HEK293 (cell line): ENCODE measurements at regions of chr7 and their contacts with region 1.

Region 1: GRCh38 chr7:139889186-139889871 is 60.3 kb downstream of the TBXAS1 start:
- H3K4me3 ChIP-seq: no peak overlapping the region
- H3K27ac ChIP-seq: no peak overlapping the region
- H3K4me1 ChIP-seq: no peaks in the 10 kb centered on the region
- CTCF ChIP-seq: no peak

Region 2: GRCh38 chr7:139871267-139871721 is 18.0 kb before region 1 on chr7:
- CTCF ChIA-PET with region 1: no interaction called
- POLR2A ChIA-PET with region 1: no interaction called
- H3K4me3 ChIP-seq: no peak overlapping the region
- H3K27ac ChIP-seq: no peak overlapping the region
- H3K4me1 ChIP-seq: no peaks in the 10 kb centered on the region
- CTCF ChIP-seq: no peak

Region 3: GRCh38 chr7:139914306-139915267 is 25.3 kb after region 1 on chr7:
- CTCF ChIA-PET with region 1: interaction called, 3 read pairs
- POLR2A ChIA-PET with region 1: interaction called, 10 read pairs
- H3K4me3 ChIP-seq: no peak overlapping the region
- H3K27ac ChIP-seq: no peak overlapping the region
- H3K4me1 ChIP-seq: no peaks in the 10 kb centered on the region
- CTCF ChIP-seq: no peak

Region 4: GRCh38 chr7:139995017-139995931 is 105.9 kb after region 1 on chr7:
- CTCF ChIA-PET with region 1: no interaction called
- POLR2A ChIA-PET with region 1: no interaction called
- H3K4me3 ChIP-seq: no peak overlapping the region
- H3K27ac ChIP-seq: no peak overlapping the region
- H3K4me1 ChIP-seq: no peaks in the 10 kb centered on the region
- CTCF ChIP-seq: no peak